ENCODE measurements at regions of chr11 and their contacts with region 1.

Region 1: DNA sequence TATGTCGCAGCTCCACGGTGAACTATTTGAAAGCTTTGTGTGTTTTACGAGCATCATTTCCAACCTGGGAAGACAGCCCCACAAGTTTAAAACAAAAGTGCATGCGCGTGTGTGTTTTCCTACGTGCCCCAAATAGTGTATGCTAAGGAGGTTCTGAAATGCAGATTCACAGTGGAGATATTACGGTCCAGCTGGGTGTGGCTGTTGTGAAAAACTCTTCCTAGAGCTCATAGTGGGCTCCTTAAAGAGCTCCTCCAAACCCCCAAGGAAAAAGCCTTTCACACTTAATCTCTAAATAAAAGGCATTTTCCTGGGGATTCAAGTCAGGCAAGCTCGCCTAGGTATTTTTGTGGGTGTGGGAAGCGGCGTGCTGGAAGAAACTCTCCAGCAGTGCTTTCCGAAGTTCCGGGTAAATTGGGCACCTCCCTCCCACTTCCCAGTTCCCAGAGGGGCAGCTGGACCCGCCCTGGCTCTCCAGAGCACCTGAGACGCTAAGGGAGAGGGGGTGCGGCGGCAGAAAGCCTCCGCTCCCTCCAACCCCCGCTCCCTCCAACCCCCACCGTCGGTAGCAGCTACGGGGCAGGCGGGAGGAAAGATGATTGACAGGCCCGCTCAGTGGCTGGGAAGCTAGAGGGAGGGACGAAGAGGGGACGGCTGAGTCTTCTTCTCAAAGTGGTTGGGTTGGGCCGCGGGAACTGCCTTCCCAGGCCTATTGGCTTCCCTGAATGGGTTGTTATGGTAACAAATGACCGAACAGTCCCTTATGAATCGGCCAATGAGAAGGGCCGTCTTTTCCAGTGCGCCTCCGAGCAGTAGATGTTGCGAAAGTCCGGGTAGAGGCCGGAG is 558 bp upstream of the PCF11 start:
- DNase-seq: peak; percentile 99
- ATAC-seq: peak; percentile 97
- H3K4me3 ChIP-seq: peak overlapping the region; percentile 82 to 97
- H3K27ac ChIP-seq: peak overlapping the region; percentile 30 to 83
- H3K4me1 ChIP-seq: no peaks in the 10 kb centered on the region
- H3K27me3 ChIP-seq: no peaks in the 10 kb centered on the region

Region 2: GRCh38 chr11:83071567-83072349 is 84.6 kb before region 1 on chr11 and contains the start of gene RAB30:
- intact Hi-C with region 1: loop called (anchors 2 to 5 kb)
- DNase-seq: peak; percentile 94 to 98
- ATAC-seq: peak; percentile 97
- H3K4me3 ChIP-seq: peak within 1 kb of the TSS; percentile 76 to 88
- H3K27ac ChIP-seq: peak within 1 kb of the TSS; percentile 86 to 92
- H3K4me1 ChIP-seq: peaks cover 2 to 5% of the 10 kb centered on the region in 2 donors
- H3K27me3 ChIP-seq: no peaks in the 10 kb centered on the region
- total RNA-seq, gene RAB30: 20.3 to 44.1 TPM

Region 3: DNA sequence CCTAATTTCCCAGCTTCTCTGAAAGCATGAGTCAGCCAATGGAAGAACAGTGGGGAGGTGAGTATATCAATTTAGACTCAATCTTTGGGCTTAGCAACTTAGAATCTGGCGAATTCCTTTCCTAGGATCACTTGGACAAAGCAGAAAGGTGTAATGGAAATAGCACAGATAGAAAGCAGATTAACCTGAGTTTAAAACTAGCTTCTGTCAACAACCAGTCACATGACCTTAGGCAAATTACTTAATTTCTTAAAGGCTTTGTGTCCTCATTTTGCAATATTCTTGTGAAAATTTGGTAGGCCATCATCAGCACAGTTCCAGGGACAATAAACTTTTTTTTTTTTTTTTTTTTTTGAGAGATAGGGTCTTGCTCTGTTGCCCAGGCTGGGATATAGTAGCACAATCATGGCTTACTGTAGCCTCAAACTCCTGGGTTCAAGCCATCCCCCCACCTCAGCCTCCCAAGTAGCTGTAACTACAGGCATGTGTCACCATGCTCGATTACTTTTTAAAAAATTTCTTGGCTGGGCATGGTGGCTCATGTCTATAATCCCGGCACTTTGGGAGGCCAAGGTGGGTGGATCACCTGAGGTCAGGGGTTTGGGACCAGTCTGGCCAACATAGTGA is 40.2 kb before region 1 on chr11:
- intact Hi-C with region 1: loop called in 1 of 2 experiments (anchors 2 kb)
- DNase-seq: no peak
- ATAC-seq: no peak
- H3K4me3 ChIP-seq: no peak overlapping the region
- H3K27ac ChIP-seq: no peak overlapping the region
- H3K4me1 ChIP-seq: no peaks in the 10 kb centered on the region
- H3K27me3 ChIP-seq: no peaks in the 10 kb centered on the region

Region 4: DNA sequence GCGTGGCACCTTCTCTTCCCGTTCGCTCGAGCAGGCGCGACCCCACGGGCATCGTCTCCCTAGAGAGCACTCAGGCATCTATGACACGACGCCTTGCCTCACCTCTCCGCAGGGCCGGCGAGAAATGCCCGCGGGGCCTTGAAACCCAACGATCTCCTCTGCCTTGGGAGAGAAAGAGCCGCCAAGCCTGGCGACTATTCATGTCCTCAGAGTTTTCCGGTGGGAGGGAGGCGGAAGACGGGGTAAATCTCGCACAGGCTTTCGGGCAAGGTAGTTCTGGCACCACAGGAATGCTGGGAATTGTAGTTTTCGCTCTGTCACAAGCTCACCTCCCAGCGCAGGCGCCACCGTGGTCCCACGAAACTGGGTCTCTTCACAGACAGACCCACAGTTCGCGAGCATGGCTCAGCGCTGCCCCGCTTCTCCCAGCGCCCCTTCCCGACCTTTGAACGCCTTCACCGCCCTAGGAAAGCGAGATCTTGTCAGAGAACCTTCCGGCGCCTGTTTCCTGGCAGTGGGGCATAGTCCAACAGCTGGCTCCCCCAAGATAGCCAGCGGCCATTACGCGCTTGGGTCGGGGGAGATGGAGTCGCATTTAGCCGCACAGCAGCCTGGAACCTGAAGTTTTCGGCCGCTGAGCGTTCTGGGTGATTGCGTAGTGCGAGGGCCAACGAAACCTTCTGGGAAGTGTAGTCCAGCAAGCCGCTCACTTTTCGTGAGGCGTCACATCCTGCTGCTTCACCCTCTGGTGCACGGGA is 129.6 kb after region 1 on chr11 and contains the start of gene CCDC90B:
- intact Hi-C with region 1: loop called in 1 of 2 experiments (anchors 1 kb)
- DNase-seq: peak; percentile 97 to 98
- ATAC-seq: peak; percentile 99
- H3K4me3 ChIP-seq: peak within 1 kb of the TSS; percentile 68 to 86
- H3K27ac ChIP-seq: peak within 1 kb of the TSS in 1 of 2 donors; percentile 99
- H3K4me1 ChIP-seq: peaks cover 0 to 5% of the 10 kb centered on the region in 2 donors
- H3K27me3 ChIP-seq: no peaks in the 10 kb centered on the region
- total RNA-seq, gene CCDC90B: 35.0 to 38.6 TPM